ENCODE measurements at regions of chr19 and their contacts with region 1.

Region 1: DNA sequence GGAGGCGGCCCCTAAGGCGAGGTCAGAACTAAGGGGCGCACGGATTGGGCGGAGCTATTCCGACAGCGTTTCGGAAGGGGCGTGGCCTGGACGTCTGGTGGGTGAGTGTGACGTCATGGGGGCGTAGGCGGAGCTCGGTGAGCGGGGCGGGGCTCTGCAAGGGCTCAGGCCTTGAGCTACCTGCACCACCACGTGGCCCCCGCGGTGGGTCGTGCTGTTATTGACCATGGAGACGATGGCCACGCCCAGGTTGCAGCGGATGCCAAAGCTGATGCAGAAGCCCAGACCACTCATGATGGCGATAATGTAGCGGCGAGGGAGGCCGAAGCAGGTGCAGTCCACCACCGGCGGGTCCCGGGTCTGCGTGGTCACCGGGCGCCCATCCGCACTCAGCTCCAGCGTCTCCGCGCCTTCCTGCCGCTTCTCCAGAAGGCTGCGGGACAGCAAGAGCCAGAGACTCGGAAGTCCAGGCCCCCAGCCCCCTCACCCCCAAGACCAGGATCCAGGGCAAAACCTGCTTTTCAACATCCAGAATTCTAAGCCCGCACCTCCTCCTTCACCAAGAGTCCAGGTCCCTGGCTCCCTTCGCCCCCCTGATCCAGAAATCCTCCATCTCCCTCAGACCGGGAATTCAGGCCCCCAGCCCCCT is 4.8 kb downstream of the SLC17A7 start:
- DNase-seq: peak; percentile 68
- CTCF ChIP-seq: no peak

Region 2: DNA sequence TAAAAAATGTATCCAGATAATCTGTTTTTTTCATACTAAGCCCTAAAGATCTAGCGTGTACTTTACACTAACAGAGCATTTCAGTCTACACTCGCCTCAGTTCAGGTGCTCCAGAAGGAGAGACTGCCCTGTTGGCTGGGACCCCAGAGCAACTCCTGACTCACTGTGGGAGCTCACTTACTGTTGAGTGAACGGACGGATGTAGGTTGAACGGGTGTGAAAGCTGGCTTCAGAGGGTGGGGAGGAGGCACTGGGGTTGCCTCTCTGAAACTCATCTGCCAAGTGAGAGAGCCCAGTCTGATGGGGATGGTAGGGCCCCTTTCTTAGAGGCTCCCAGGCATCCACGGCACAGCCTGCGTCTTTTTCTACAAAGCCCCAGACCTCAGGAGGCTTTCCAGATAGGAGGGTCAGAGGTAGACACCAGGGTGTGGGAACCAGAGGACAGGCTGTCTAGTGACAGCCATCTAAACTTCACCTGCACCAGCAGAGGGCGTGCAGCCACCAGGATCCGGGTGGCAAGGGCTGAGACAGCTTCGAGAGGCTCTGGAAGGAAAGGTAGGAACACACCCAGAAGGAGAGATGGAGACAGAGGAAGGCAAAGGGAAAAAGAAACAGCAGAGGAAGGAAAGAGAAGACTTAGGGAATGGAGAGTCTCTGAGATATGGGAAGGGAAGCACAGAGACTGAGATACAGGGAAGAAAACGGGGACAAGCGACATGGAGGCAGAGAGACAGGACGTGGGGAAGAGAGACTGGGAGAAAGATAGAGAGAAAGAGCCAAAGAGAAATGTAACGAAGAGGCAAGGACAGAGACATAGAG is 44.7 kb before region 1 on chr19:
- in situ Hi-C with region 1: loop called (anchors 5 kb)
- DNase-seq: peak; percentile 88
- CTCF ChIP-seq: peak; percentile 96

Region 3: GRCh38 chr19:49555600-49556411 is 119.3 kb after region 1 on chr19:
- in situ Hi-C with region 1: no loop called
- DNase-seq: no peak
- CTCF ChIP-seq: no peak

Measured in GM13977 (cell line).